CD8-positive, alpha-beta memory T cell (primary cell): ENCODE measurements at regions of chrX and their contacts with region 1.

Region 1: GRCh38 chrX:136028251-136028984 is 43.2 kb downstream of the SLC9A6 start:
- DNase-seq: peak in 2 of 5 donors; percentile 33 to 45
- H3K4me3 ChIP-seq: no peak overlapping the region
- H3K4me3 Mint-ChIP-seq: no peak overlapping the region
- H3K27ac ChIP-seq: no peak overlapping the region
- H3K27ac Mint-ChIP-seq: no peak overlapping the region
- H3K4me1 ChIP-seq: no peaks in the 10 kb centered on the region
- H3K4me1 Mint-ChIP-seq: no peaks in the 10 kb centered on the region
- H3K27me3 ChIP-seq: no peaks in the 10 kb centered on the region
- H3K27me3 Mint-ChIP-seq: peaks cover 0 to 4% of the 10 kb centered on the region in 2 donors

Region 2: DNA sequence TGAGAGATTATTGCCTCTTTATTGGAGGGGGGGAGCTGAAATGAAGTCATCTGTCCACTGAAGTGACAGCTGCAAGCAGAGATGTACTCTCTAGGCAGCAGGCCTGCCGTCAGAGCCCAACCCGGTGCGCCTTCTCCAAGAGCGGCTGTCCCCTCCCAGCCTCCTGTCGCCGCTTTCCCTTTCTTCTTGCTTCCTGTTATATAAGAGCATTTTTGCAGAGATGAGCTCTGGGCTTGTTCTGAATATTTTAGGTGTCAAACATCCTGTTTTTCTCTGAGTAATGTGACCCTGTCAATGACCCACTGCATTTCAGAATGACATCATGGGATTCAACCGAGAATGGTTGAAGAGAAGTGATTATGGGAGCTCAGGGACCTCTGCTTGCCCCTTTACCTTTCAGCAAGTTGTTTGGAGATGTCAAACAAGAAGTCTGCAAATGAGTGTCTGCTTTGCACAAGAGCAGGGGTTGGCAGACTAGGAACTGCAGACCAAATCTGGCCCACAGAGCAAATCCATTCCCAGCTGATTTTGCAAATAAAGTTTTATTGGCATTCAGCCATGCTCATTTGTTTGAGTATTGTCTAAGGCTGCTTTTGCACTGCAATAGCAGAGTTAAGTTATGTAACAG is 36.7 kb after region 1 on chrX:
- CTCF ChIA-PET with region 1: no interaction called
- POLR2A ChIA-PET with region 1: no interaction called
- DNase-seq: peak in 2 of 5 donors; percentile 10 to 65
- H3K4me3 ChIP-seq: no peak overlapping the region
- H3K4me3 Mint-ChIP-seq: peak overlapping the region in 3 of 7 donors; percentile 15 to 39 (median 38)
- H3K27ac ChIP-seq: no peak overlapping the region
- H3K27ac Mint-ChIP-seq: peak overlapping the region in 4 of 8 donors; percentile 34 to 71 (median 41)
- H3K4me1 ChIP-seq: peaks cover 20% of the 10 kb centered on the region
- H3K4me1 Mint-ChIP-seq: peaks cover 6 to 18% (median 13%) of the 10 kb centered on the region in 3 donors
- H3K27me3 ChIP-seq: no peaks in the 10 kb centered on the region
- H3K27me3 Mint-ChIP-seq: peaks cover 5 to 15% of the 10 kb centered on the region in 2 donors

Region 3: GRCh38 chrX:136162831-136163570 is 134.6 kb after region 1 on chrX:
- CTCF ChIA-PET with region 1: interaction called, 16 read pairs
- POLR2A ChIA-PET with region 1: no interaction called
- DNase-seq: peak in 3 of 5 donors; percentile 9 to 49 (median 33)
- H3K4me3 ChIP-seq: no peak overlapping the region
- H3K4me3 Mint-ChIP-seq: peak overlapping the region in 1 of 7 donors; percentile 44
- H3K27ac ChIP-seq: no peak overlapping the region
- H3K27ac Mint-ChIP-seq: peak overlapping the region in 1 of 8 donors; percentile 0
- H3K4me1 ChIP-seq: no peaks in the 10 kb centered on the region
- H3K4me1 Mint-ChIP-seq: no peaks in the 10 kb centered on the region
- H3K27me3 ChIP-seq: no peaks in the 10 kb centered on the region
- H3K27me3 Mint-ChIP-seq: peaks cover 0 to 10% of the 10 kb centered on the region in 2 donors

Region 4: GRCh38 chrX:136268051-136269048 is 239.9 kb after region 1 on chrX:
- CTCF ChIA-PET with region 1: interaction called, 33 read pairs
- POLR2A ChIA-PET with region 1: no interaction called
- DNase-seq: peak; percentile 4 to 50 (median 34)
- H3K4me3 ChIP-seq: no peak overlapping the region
- H3K4me3 Mint-ChIP-seq: peak overlapping the region in 1 of 7 donors; percentile 61
- H3K27ac ChIP-seq: no peak overlapping the region
- H3K27ac Mint-ChIP-seq: no peak overlapping the region
- H3K4me1 ChIP-seq: no peaks in the 10 kb centered on the region
- H3K4me1 Mint-ChIP-seq: no peaks in the 10 kb centered on the region
- H3K27me3 ChIP-seq: no peaks in the 10 kb centered on the region
- H3K27me3 Mint-ChIP-seq: no peaks in the 10 kb centered on the region